Panc1 (cell line): ENCODE measurements at regions of chr19 and their contacts with region 1.

Region 1: DNA sequence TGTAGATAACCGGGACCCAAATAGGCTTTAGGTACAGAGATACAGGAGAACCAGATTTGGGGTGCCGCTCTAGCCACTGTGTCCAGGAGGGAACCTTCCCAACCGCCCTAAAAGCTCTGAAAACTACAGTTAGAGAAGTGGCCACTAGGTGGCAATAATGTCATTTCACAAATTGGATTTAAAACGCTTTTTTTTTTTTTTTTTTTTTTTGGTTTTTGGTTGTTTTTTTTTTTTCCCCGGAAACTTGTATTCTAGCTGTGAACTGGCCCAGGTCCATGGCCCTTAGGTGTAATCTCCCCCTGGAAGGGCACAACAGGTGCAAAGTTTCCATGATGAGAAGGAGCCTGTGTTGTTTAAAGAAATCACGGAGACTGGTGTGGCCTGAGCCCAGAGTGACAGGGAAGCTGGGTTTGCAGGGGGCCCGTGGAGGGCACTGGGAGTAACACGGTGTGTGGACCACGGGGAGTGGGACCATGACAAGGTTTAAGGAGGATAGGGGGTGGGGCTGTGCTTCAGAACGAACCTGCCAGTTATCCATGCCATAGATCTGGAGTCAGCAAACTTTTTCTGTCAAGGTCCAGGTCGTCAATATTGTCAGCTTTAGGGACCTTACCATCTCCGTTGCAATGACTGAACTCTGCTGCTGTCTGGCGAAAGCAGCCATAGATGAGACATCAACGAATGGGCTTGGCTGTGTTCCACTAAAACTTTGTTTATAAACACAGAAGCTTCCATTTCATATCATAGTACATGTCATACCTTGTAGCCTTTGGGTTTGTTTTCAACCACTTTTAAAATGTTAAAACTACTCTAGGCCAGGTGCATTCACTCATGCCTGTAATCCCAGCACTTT is 10.1 kb downstream of the OR1I1 start:
- DNase-seq: no peak
- ATAC-seq: peak; percentile 79
- H3K4me3 ChIP-seq: peak overlapping the region in 1 of 2 experiments; percentile 31; a peak in 2 of 4 replicates
- H3K27ac ChIP-seq: no peak overlapping the region
- H3K4me1 ChIP-seq: no peaks in the 10 kb centered on the region
- H3K27me3 ChIP-seq: no peaks in the 10 kb centered on the region
- CTCF ChIP-seq: peak; percentile 67

Region 2: DNA sequence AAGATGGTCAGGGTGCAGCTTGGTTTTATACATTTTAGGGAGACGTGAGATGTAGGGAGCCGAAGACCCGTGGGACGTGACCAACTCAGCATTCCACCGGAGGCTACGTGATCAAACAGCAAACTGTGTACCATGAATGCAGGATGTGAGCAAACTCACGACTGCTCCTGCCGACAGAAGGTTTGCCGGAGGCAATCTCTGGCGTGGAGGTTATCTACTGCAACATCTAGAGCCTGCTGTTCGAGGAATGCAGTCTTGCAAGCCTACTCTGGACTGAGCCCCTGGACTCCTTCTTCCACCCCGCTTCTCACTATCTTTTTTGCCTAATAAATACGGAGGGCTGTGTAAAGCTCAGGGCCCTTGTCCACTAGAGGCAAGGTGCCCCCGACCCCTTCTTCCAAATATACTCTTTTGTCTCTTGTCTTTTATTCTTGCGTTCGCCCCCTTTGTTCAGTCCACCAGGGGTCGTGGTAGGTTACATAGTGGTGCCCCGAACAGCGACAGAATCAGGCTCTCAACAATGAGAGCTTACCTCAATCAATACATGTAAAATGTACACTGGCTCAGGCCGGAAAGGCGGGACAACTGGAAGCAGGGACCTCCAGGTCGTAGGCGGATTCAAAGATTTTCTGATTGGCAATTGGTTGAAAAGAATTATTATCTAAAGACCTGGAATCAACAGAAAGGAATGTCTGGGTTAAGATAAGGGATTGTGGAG is 19.0 kb before region 1 on chr19:
- CTCF ChIA-PET with region 1: interaction called, 13 read pairs
- POLR2A ChIA-PET with region 1: no interaction called
- in situ Hi-C with region 1: no loop called
- intact Hi-C with region 1: no loop called
- DNase-seq: no peak
- ATAC-seq: peak; percentile 96
- H3K4me3 ChIP-seq: peak overlapping the region; percentile 9 to 24; a peak in 2 of 4 replicates
- H3K27ac ChIP-seq: peak overlapping the region; percentile 88
- H3K4me1 ChIP-seq: peaks cover 9% of the 10 kb centered on the region
- H3K27me3 ChIP-seq: no peaks in the 10 kb centered on the region
- CTCF ChIP-seq: peak; percentile 73

Region 3: GRCh38 chr19:15115111-15116053 is 23.3 kb after region 1 on chr19:
- CTCF ChIA-PET with region 1: interaction called, 10 read pairs
- POLR2A ChIA-PET with region 1: no interaction called
- in situ Hi-C with region 1: no loop called
- intact Hi-C with region 1: no loop called
- DNase-seq: no peak
- ATAC-seq: peak; percentile 43
- H3K4me3 ChIP-seq: no peak overlapping the region
- H3K27ac ChIP-seq: no peak overlapping the region
- H3K4me1 ChIP-seq: no peaks in the 10 kb centered on the region
- H3K27me3 ChIP-seq: no peaks in the 10 kb centered on the region
- CTCF ChIP-seq: no peak

Region 4: DNA sequence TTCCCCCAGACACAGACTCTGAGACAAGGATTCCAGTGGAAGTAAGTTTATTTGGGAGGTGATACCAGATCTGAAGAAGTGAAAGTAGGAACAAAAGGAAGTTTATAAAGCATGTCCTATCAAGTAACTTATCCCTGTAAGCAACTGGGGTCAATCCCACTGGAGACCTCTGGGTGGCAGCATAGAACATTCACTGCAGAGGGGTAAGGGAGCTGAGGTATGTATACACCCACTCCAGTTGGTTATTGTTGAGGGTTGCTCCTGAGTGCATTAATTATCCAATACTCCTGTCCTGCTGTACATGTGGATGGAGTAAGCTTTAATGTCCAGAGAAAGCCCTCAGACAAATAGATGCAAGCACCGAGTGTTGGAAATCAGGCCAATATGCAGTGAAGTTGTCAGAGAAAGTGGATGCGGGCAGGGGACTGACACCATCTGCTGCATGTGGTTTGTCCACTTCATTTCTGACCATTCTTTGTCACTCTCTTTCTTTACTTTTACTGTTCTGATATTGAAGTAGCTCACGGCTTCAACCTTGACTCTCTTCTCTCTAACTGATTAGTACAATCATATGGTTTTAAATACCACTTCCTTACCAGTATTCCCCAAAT is 62.0 kb after region 1 on chr19:
- CTCF ChIA-PET with region 1: interaction called, 12 read pairs
- POLR2A ChIA-PET with region 1: no interaction called
- in situ Hi-C with region 1: no loop called
- intact Hi-C with region 1: loop called (anchors 1 kb)
- DNase-seq: no peak
- ATAC-seq: peak; percentile 73
- H3K4me3 ChIP-seq: no peak overlapping the region
- H3K27ac ChIP-seq: no peak overlapping the region
- H3K4me1 ChIP-seq: no peaks in the 10 kb centered on the region
- H3K27me3 ChIP-seq: no peaks in the 10 kb centered on the region
- CTCF ChIP-seq: peak; percentile 75

Region 5: DNA sequence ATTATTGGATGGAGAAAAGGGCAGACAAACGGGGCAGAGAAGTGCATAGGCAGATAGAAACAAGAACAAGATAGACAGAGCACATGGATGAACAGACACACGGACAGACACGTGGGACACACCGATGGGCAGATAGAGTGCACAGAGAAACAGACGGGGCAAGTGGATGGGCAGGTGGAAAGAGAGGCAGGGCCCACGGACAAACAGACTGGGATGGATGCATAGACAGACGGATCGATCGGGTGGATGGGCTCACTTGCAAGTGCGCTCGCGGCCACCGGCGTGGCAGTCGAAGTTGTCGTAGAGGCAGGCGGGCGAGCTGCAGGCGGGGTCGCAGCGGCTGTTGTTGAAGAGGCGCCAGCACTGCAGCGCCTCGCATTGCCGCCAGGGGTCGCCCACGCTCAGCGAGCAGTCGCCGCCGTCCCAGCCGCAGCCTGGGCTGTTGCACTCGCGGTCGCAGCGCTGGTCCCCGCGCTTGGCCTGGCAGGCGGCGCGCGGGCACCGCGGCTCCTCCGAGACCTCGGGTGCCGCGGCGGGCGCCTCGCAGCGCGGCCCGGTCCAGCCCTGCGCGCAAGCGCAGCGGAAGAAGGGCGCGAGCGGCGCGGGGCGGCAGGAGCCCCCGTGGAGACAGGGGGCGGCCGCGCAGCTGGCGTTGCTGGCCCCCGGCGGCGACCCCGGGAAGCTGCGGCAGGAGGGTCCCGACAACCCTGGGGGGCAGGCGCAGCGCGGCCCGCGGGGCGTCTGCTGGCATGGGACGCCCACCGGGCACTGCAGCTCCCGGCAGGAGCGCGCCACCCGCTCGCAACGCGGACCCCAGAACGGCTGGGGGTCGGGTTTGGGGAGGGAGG is 85.4 kb after region 1 on chr19:
- CTCF ChIA-PET with region 1: interaction called, 24 read pairs
- POLR2A ChIA-PET with region 1: no interaction called
- in situ Hi-C with region 1: no loop called
- intact Hi-C with region 1: no loop called
- DNase-seq: no peak
- ATAC-seq: peak; percentile 94
- H3K4me3 ChIP-seq: peak overlapping the region; percentile 14 to 25; a peak in 3 of 4 replicates
- H3K27ac ChIP-seq: no peak overlapping the region
- H3K4me1 ChIP-seq: no peaks in the 10 kb centered on the region
- H3K27me3 ChIP-seq: no peaks in the 10 kb centered on the region
- CTCF ChIP-seq: peak; percentile 95

Region 6: GRCh38 chr19:15265850-15266248 is 173.7 kb after region 1 on chr19:
- CTCF ChIA-PET with region 1: interaction called, 12 read pairs
- POLR2A ChIA-PET with region 1: no interaction called
- in situ Hi-C with region 1: no loop called
- intact Hi-C with region 1: no loop called
- DNase-seq: no peak
- ATAC-seq: peak; percentile 56
- H3K4me3 ChIP-seq: no peak overlapping the region
- H3K27ac ChIP-seq: no peak overlapping the region; the same call in 1 of the 2 replicates
- H3K4me1 ChIP-seq: peaks cover 26% of the 10 kb centered on the region
- H3K27me3 ChIP-seq: no peaks in the 10 kb centered on the region
- CTCF ChIP-seq: no peak

Region 7: GRCh38 chr19:16849177-16849576 is 1757.0 kb after region 1 on chr19:
- CTCF ChIA-PET with region 1: no interaction called
- POLR2A ChIA-PET with region 1: no interaction called
- in situ Hi-C with region 1: no loop called
- intact Hi-C with region 1: no loop called
- DNase-seq: peak; percentile 47
- ATAC-seq: no peak
- H3K4me3 ChIP-seq: no peak overlapping the region
- H3K27ac ChIP-seq: no peak overlapping the region
- H3K4me1 ChIP-seq: no peaks in the 10 kb centered on the region
- H3K27me3 ChIP-seq: no peaks in the 10 kb centered on the region
- CTCF ChIP-seq: no peak